Activated B cell treated with CpG ODN at 0.5 μM for 24 hours (primary cell): ENCODE measurements at regions of chr9 and their contacts with region 1.

Region 1: GRCh38 chr9:101398068-101398929 is at the starts of genes MRPL50 and ZNF189:
- DNase-seq: peak; percentile 82
- ATAC-seq: peak; percentile 94
- H3K4me3 Mint-ChIP-seq: peak within 1 kb of the TSS; percentile 97
- H3K27ac Mint-ChIP-seq: peak within 1 kb of the TSS; percentile 98
- H3K4me1 Mint-ChIP-seq: peaks cover 74% of the 10 kb centered on the region
- H3K27me3 Mint-ChIP-seq: no peaks in the 10 kb centered on the region
- CTCF ChIP-seq: no peak
- total RNA-seq, gene MRPL50: 14.0 and 16.1 TPM in 2 replicates
- total RNA-seq, gene ZNF189: 16.1 and 21.1 TPM in 2 replicates

Region 2: DNA sequence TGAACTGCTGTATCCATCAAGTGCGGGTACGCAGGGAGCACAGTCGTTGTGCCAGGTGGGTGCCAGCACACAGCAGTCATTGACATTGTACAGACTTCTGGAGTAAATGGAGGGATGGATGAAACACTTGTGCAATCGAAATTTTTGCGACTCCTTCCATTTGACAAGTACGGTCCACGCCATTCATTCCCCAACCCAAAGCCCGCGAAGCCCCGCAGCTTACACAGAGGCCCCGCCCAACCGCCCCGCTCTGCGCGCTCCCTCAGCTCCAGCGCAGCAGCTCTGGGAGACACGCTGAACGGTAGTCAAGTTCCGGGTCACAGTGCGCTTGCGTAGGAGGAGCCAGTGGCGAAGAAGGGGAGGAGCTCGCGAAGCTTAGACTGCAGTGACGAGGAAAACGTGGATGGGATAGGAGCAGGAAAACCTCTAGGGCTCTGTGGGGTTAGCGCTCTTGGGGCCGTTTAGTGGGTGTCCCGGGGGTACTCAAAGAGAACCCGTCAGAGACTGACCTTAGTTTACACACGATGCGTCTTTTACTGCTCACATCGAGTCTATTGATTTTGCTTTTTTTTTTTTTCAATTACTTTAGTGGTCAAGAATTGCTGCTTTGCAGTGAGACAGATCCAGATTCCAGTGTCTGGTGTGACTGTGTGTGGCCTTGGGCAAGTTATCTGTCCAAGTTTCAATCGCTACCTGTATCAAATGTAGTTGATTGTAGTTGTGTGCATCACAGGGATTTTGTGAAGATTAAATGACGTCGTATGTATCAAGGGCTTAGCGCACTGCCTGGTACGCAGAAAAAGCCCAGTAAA is 986.6 kb before region 1 on chr9:
- CTCF ChIA-PET with region 1: no interaction called
- POLR2A ChIA-PET with region 1: no interaction called
- intact Hi-C with region 1: loop called (anchors 5 kb)
- DNase-seq: peak; percentile 76
- ATAC-seq: peak; percentile 100
- H3K4me3 Mint-ChIP-seq: peak overlapping the region; percentile 89
- H3K27ac Mint-ChIP-seq: peak overlapping the region; percentile 78
- H3K4me1 Mint-ChIP-seq: peaks cover 14% of the 10 kb centered on the region
- H3K27me3 Mint-ChIP-seq: peaks cover 9% of the 10 kb centered on the region
- CTCF ChIP-seq: no peak

Region 3: GRCh38 chr9:101387871-101388506 is 10.3 kb before region 1 on chr9:
- CTCF ChIA-PET with region 1: interaction called, 3 read pairs
- POLR2A ChIA-PET with region 1: no interaction called
- intact Hi-C with region 1: loop called (anchors 1 kb)
- DNase-seq: no peak
- ATAC-seq: no peak
- H3K4me3 Mint-ChIP-seq: no peak overlapping the region
- H3K27ac Mint-ChIP-seq: peak overlapping the region; percentile 25
- H3K4me1 Mint-ChIP-seq: peaks cover 14% of the 10 kb centered on the region
- H3K27me3 Mint-ChIP-seq: no peaks in the 10 kb centered on the region
- CTCF ChIP-seq: no peak

Region 4: GRCh38 chr9:101449140-101449721 is 50.9 kb after region 1 on chr9:
- CTCF ChIA-PET with region 1: interaction called, 3 read pairs
- POLR2A ChIA-PET with region 1: interaction called, 5 read pairs
- intact Hi-C with region 1: loop called (anchors 1 kb)
- DNase-seq: peak; percentile 46
- ATAC-seq: peak; percentile 97
- H3K4me3 Mint-ChIP-seq: peak overlapping the region; percentile 78
- H3K27ac Mint-ChIP-seq: no peak overlapping the region
- H3K4me1 Mint-ChIP-seq: peaks cover 11% of the 10 kb centered on the region
- H3K27me3 Mint-ChIP-seq: peaks cover 39% of the 10 kb centered on the region
- CTCF ChIP-seq: peak; percentile 28